Mammary epithelial cell (primary cell): ENCODE measurements at regions of chr6 and their contacts with region 1.

Region 1: DNA sequence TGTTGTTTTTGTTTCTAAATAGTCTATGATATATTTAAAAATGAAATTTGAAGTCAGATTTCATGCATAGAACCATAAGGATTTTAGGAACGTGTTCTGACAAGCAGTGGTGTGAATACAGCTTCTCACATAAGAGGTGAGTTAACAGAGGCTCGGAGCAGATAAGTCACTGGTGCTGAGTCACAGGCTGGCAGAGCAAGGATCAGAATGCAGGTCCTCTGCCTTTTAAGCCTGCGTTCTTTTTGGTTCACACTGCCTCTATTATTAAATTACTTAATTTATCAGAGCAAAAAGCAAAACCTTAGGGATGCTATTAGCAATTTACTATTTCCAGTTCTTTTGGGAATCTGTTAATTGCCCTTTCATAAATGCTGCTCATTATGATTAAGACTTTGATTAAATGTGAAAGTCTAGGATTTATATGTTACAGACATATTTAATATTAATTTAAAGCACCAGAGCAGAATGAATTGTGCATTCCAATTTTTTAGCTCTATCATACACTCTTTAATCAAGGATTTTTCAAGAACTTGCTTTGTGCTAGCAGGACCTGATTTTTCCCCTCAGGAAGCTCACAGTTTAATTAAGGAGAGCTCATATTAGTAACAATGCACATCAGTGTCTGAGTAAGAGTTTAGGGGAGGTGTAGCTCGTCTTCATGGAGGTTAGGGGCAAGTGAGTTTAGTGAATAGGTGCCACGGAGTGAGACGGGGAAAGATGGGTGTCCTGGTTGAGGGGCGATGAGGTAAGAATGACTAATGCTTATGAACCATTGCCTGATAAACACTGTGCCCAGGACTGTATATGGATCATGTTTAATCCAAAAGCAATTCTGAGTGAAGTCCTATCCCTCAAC is 212.7 kb upstream of the AGPAT4 start:
- DNase-seq: peak; percentile 88
- H3K4me3 ChIP-seq: no peak overlapping the region
- H3K27ac ChIP-seq: peak overlapping the region; percentile 59
- H3K4me1 ChIP-seq: peaks cover 14% of the 10 kb centered on the region
- H3K27me3 ChIP-seq: no peaks in the 10 kb centered on the region
- CTCF ChIP-seq: no peak

Region 2: GRCh38 chr6:161406646-161407045 is 79.9 kb before region 1 on chr6:
- CTCF ChIA-PET with region 1: no interaction called
- dilution Hi-C with region 1: no loop called
- in situ Hi-C with region 1: loop called in 1 of 2 experiments (anchors 5 kb)
- intact Hi-C with region 1: no loop called
- DNase-seq: peak; percentile 95
- H3K4me3 ChIP-seq: no peak overlapping the region
- H3K27ac ChIP-seq: peak overlapping the region; percentile 77
- H3K4me1 ChIP-seq: peaks cover 17% of the 10 kb centered on the region
- H3K27me3 ChIP-seq: no peaks in the 10 kb centered on the region
- CTCF ChIP-seq: no peak

Region 3: GRCh38 chr6:161439093-161439492 is 47.5 kb before region 1 on chr6:
- CTCF ChIA-PET with region 1: no interaction called
- dilution Hi-C with region 1: no loop called
- in situ Hi-C with region 1: no loop called
- intact Hi-C with region 1: loop called (anchors 1 kb)
- DNase-seq: peak; percentile 89
- H3K4me3 ChIP-seq: no peak overlapping the region
- H3K27ac ChIP-seq: peak overlapping the region; percentile 57
- H3K4me1 ChIP-seq: peaks cover 47% of the 10 kb centered on the region
- H3K27me3 ChIP-seq: no peaks in the 10 kb centered on the region
- CTCF ChIP-seq: no peak